HepG2 (cell line): ENCODE measurements at regions of chr5 and their contacts with region 1.

Region 1: GRCh38 chr5:10353241-10354047 is at the start of gene MARCHF6:
- DNase-seq: peak; percentile 83
- ATAC-seq: peak; percentile 96
- H3K4me3 ChIP-seq: peak within 1 kb of the TSS; percentile 88 to 92 (median 92)
- H3K27ac ChIP-seq: peak within 1 kb of the TSS; percentile 98
- H3K4me1 ChIP-seq: peaks cover 43% of the 10 kb centered on the region
- H3K27me3 ChIP-seq: no peaks in the 10 kb centered on the region; a peak in 1 of 5 replicates
- CTCF ChIP-seq: no peak
- EP300 ChIP-seq: no peak
- POLR2A ChIP-seq: peak; percentile 93 to 96
- RAD21 ChIP-seq: peak; percentile 15; the same call in 1 of the 2 replicates
- total RNA-seq, gene MARCHF6: 39.5 and 48.6 TPM in 2 replicates

Region 2: DNA sequence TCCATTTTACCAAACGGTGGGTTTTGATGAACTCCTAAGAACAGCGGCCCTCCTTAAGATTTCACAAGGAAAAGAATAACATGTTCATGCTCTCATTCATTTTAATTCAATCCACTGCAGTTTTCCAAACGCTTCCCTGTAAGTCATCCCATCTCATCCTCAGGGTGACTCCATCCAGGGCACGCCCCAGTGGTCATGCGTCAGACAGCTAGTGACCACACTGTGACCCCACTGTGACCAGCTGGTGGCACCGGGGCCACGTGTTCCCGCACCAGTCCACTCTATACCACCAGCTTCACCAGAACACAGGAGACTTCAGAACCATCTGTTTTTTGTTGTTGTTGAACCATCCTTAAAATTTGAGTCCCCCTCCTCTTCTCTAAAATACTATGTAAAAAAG is 118.1 kb before region 1 on chr5:
- CTCF ChIA-PET with region 1: no interaction called
- POLR2A ChIA-PET with region 1: no interaction called
- in situ Hi-C with region 1: no loop called
- intact Hi-C with region 1: no loop called
- DNase-seq: no peak
- ATAC-seq: no peak
- H3K4me3 ChIP-seq: no peak overlapping the region
- H3K27ac ChIP-seq: no peak overlapping the region
- H3K4me1 ChIP-seq: no peaks in the 10 kb centered on the region
- H3K27me3 ChIP-seq: no peaks in the 10 kb centered on the region
- CTCF ChIP-seq: peak; percentile 14; the same call in 1 of the 2 replicates
- EP300 ChIP-seq: no peak
- POLR2A ChIP-seq: no peak
- RAD21 ChIP-seq: no peak

Region 3: DNA sequence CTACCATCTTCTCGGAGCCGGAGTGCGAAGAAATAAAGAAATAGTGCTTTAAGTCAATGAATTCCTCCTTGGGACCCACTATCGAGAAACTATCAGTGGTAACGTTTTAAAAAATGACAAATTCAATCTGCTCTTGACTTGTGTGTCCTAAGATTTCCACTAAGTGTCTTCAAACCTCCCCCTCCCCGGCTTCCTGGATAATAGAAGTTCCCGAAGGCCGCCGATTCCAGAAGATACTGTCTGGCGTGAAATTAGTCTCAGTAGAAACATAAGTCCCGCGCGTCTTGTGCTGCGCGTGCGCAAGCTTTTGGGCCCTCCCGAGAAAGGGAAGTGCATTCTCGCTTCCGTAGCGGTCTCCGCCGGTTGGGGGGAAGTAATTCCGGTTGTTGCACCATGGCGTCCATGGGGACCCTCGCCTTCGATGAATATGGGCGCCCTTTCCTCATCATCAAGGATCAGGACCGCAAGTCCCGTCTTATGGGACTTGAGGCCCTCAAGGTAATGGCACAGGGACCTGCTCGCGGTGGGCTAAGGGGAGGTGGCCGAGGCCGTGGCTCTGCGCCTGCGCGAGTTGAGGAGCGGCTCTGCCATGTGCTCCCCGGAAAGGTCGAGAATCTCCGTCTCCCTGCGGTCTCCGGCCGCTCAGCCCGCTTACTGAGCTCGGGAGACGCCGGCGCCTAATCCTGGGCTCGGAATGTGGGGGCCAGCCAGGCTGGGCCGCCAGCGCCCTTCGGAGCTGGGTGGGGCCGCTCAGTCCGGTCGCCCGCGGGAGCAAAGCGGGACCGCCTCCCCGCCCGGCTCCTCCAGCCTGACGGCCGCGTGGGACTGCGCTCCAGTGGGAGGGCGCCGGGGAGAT is 103.3 kb before region 1 on chr5 and contains the start of gene CCT5:
- CTCF ChIA-PET with region 1: no interaction called
- POLR2A ChIA-PET with region 1: interaction called, 12 read pairs
- in situ Hi-C with region 1: no loop called
- intact Hi-C with region 1: no loop called
- DNase-seq: peak; percentile 97
- ATAC-seq: peak; percentile 74
- H3K4me3 ChIP-seq: peak within 1 kb of the TSS; percentile 80 to 90 (median 85)
- H3K27ac ChIP-seq: peak within 1 kb of the TSS; percentile 98
- H3K4me1 ChIP-seq: peaks cover 67% of the 10 kb centered on the region
- H3K27me3 ChIP-seq: peaks cover 0 to 3% of the 10 kb centered on the region in 2 experiments; a peak in 1 of 5 replicates
- CTCF ChIP-seq: no peak
- EP300 ChIP-seq: peak in 1 of 2 experiments; percentile 44; a peak in 2 of 4 replicates
- POLR2A ChIP-seq: peak; percentile 90 to 94
- RAD21 ChIP-seq: no peak; the same call in 1 of the 2 replicates
- total RNA-seq, gene CCT5: 708 and 1,053 TPM in 2 replicates

Region 4: GRCh38 chr5:10283927-10284635 is 69.4 kb before region 1 on chr5:
- CTCF ChIA-PET with region 1: interaction called, 3 read pairs
- POLR2A ChIA-PET with region 1: interaction called, 8 read pairs
- in situ Hi-C with region 1: no loop called
- intact Hi-C with region 1: loop called (anchors 2 kb)
- DNase-seq: peak; percentile 55
- ATAC-seq: peak; percentile 99
- H3K4me3 ChIP-seq: no peak overlapping the region
- H3K27ac ChIP-seq: no peak overlapping the region
- H3K4me1 ChIP-seq: no peaks in the 10 kb centered on the region
- H3K27me3 ChIP-seq: no peaks in the 10 kb centered on the region
- CTCF ChIP-seq: peak; percentile 90
- EP300 ChIP-seq: no peak
- POLR2A ChIP-seq: no peak
- RAD21 ChIP-seq: peak; percentile 89

Region 5: GRCh38 chr5:10317825-10318682 is 35.4 kb before region 1 on chr5:
- CTCF ChIA-PET with region 1: no interaction called
- POLR2A ChIA-PET with region 1: interaction called, 14 read pairs
- in situ Hi-C with region 1: no loop called
- intact Hi-C with region 1: no loop called
- DNase-seq: no peak
- ATAC-seq: no peak; the same call in 2 of the 3 replicates
- H3K4me3 ChIP-seq: no peak overlapping the region
- H3K27ac ChIP-seq: no peak overlapping the region
- H3K4me1 ChIP-seq: no peaks in the 10 kb centered on the region
- H3K27me3 ChIP-seq: peaks cover 0 to 2% of the 10 kb centered on the region in 2 experiments; a peak in 1 of 5 replicates
- CTCF ChIP-seq: no peak
- EP300 ChIP-seq: no peak
- POLR2A ChIP-seq: no peak
- RAD21 ChIP-seq: no peak

Region 6: GRCh38 chr5:10323588-10324488 is 29.6 kb before region 1 on chr5:
- CTCF ChIA-PET with region 1: no interaction called
- POLR2A ChIA-PET with region 1: interaction called, 14 read pairs
- in situ Hi-C with region 1: no loop called
- intact Hi-C with region 1: no loop called
- DNase-seq: peak; percentile 30
- ATAC-seq: peak; percentile 76
- H3K4me3 ChIP-seq: no peak overlapping the region
- H3K27ac ChIP-seq: peak overlapping the region; percentile 29
- H3K4me1 ChIP-seq: peaks cover 21% of the 10 kb centered on the region
- H3K27me3 ChIP-seq: peaks cover 0 to 4% of the 10 kb centered on the region in 2 experiments; a peak in 1 of 5 replicates
- CTCF ChIP-seq: no peak
- EP300 ChIP-seq: no peak
- POLR2A ChIP-seq: no peak
- RAD21 ChIP-seq: no peak

Region 7: DNA sequence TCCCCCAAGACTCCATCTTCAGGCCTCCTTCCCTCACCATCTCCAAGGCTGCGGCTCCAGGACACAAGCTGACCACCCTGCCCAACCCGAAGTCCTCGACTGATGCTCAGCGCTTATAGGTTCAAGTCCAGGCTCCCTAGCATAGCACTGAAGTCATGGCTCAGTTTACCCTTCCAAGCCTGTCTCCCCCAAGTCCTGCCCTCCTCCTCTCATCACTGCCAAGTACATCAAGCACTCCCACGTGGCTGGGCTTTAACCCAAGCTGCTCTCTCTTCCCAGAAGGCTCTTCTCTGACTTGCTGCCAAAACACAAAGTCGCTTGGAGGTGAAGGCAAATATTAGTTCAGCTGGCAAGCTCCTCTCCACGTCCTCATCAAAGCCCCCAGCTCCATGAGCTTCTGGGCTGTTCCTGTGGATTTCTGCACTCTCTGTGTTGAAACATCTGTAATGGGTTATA is 22.1 kb before region 1 on chr5:
- CTCF ChIA-PET with region 1: no interaction called
- POLR2A ChIA-PET with region 1: interaction called, 10 read pairs
- in situ Hi-C with region 1: no loop called
- intact Hi-C with region 1: no loop called
- DNase-seq: peak; percentile 89
- ATAC-seq: peak; percentile 92
- H3K4me3 ChIP-seq: no peak overlapping the region
- H3K27ac ChIP-seq: no peak overlapping the region
- H3K4me1 ChIP-seq: peaks cover 50% of the 10 kb centered on the region
- H3K27me3 ChIP-seq: peaks cover 0 to 11% of the 10 kb centered on the region in 2 experiments; a peak in 1 of 5 replicates
- CTCF ChIP-seq: 0 out of 2 replicates have a peak, but pooled peaks have one; percentile 4
- EP300 ChIP-seq: peak in 1 of 2 experiments; percentile 68; a peak in 2 of 4 replicates
- POLR2A ChIP-seq: no peak
- RAD21 ChIP-seq: no peak